Left cardiac atrium (tissue), 4 donors: ENCODE measurements at regions of chr7 and their contacts with region 1.

Region 1: DNA sequence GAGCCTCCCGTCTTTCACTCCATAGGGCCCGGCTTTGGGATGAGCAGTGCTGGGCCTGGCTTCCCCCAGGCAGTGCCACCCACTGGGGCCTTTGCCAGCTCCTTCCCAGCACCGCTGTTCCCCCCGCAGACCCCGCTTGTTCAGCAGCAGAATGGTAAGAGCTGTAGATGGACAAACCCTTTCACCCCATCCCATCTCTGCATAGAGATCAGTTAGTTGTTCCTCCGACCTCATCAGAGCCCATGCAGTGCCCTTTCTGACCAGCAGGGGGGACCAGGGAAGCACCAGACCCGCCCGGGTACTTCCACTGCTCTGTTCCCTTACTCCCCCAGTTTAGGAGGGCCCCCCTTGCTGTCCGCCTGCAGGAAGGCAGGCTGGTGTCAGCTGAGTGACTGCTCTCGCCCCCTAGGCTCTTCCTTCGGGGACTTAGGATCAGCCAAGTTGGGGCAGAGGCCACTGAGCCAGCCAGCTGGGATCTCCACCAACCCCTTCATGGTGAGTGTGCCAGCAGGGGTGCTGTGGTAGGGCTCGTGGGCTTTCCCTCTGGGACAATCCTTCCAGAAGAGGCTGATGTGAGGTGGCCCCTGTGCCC is 9.8 kb downstream of the SAP25 start:
- DNase-seq: peak; percentile 86
- ATAC-seq: peak; percentile 62 to 70

Region 2: DNA sequence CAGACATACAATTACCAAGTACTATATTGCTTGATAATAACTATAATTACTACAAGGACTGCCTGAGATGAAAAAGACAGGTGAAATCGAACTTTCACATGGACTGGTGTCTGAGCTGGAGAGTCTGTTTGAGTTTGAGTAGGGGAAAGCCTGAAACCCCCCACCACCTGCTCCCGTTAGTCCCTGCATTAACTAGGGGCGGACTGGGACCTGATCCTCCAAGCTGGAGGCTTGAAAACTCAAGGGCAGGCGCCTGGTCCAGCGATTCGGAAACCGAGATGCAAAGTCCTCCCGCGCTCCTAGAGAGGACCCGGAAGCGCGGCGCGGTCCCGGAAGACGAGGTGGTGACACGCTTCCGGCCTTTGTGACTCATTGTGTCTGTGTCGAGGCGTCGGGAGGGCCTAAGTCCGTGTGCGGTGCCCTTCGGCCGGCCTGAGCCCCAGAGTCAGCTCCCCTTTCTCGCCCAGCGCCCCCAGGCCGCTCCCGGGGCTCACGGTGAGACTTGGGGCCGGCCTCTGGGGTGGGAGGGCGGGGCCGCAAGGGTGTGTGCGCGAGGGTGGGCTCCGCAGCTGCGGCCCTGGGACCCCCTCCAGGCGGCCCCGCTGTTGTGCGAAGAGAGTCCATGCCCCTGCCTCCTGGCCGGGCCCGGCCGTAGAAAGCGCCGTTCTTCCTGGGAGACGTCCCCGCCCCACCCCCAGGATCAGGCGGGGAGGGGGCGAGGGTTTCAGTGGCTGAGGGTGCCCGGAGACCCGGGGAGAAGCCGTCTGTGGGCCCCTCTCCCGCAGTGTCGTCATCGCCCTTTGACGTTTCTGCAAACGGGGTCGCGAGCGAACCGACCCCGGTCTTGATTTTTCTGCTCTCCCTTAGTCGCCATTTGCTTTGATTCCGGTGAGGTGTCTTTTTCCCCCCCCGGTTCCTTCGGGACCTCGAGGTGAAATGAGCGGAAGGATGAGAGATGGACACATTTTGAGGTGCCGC is 548.4 kb before region 1 on chr7 and contains the start of gene ZKSCAN1:
- intact Hi-C with region 1: no loop called
- DNase-seq: peak; percentile 92
- ATAC-seq: peak; percentile 99
- total RNA-seq, gene ZKSCAN1: 36.7 to 47.0 TPM

Region 3: DNA sequence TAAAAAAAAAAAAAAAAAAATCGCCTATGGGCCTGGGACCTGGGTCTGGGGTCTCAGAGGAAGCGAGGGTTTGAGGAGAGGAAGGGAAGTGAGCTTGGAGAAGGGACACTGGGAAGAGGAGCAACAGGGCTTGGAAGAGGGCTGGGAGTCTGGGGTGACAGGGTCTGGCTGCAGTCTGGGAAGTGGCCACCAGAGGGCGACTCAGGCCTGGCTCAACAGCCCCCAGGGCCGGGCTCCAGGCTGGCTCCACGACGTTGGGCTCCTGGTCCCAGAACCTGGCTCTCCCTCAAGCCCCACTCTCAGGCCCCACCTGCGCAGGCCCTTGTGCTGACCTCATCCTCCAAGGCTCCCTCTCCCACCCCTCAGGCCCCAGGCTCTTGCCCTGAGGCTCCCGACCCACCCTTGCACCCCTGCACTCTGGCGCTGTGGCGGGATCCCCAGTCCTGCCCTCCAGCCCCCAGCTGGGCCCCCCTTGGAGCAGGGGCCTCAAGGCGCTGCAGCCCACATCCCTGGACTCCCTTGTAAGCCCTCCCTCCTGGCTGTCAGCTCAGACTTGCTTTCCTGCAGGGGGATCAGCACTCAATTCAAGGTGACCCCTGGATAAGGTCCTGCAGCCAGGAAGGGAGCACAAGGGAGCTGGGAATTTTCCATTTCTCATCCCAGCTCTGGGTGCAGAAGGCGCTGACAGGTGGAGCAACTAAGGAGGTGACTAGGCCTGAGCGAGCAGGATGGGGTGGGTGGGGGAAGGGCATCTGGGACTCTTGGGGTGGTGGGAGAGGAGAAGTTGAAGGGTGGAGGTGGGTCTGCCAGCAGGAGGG is 94.5 kb before region 1 on chr7:
- intact Hi-C with region 1: loop called (anchors 1 to 5 kb)
- DNase-seq: peak; percentile 89
- ATAC-seq: peak; percentile 64 to 71

Region 4: GRCh38 chr7:100691676-100692577 is 128.0 kb after region 1 on chr7:
- intact Hi-C with region 1: loop called in 1 of 2 experiments (anchors 5 kb)
- DNase-seq: peak; percentile 82
- ATAC-seq: peak; percentile 77